HepG2 (cell line): ENCODE measurements at regions of chr3 and their contacts with region 1.

Region 1: DNA sequence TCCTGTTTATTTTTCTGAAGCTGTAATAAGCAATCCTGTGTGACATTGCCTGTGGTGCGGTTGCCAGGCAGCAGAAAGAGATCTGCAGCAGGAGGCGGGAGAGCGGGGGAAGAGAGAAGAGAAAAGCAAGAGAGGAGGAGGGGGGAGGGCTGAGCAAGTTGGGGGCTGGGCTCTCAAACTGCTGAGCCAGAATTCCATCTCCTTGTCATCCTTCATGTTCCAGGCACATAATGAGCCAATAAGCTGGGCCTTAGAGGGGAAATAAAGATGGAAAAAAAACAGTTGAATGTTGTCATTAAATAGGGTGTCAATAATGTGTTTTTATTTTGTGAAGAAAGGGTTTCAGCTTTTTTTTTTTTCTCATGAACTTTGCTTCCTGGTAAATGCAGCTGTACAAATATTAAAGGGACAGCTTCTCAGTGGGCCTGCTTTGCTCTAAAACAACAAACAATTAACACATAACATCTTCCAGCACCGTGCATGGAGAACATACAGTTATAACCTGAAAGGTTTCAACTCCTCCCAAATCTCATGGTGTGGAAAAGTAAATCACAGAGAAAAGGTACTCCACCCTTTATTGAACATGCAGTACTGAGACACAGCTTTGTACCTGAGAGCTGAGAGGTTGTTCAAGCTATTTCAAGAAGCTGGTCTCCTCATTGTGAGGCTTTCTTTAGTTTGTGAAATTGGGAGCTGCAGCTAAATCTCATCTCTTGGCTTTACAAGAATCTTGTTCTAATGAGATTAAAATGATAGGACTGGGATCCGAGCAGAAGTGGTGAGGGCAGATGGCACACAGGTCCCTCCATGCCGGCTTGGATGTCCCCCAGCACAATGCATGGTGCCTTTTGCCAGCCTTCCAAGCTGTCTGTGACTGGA is 451.1 kb upstream of the KCNMB2 start:
- DNase-seq: peak; percentile 9
- ATAC-seq: peak; percentile 87
- H3K4me3 ChIP-seq: no peak overlapping the region
- H3K27ac ChIP-seq: no peak overlapping the region
- H3K4me1 ChIP-seq: peaks cover 19% of the 10 kb centered on the region
- H3K27me3 ChIP-seq: no peaks in the 10 kb centered on the region
- CTCF ChIP-seq: no peak
- EP300 ChIP-seq: no peak
- POLR2A ChIP-seq: no peak
- RAD21 ChIP-seq: no peak

Region 2: GRCh38 chr3:178385280-178385952 is 300.2 kb after region 1 on chr3:
- CTCF ChIA-PET with region 1: no interaction called
- POLR2A ChIA-PET with region 1: no interaction called
- in situ Hi-C with region 1: no loop called
- intact Hi-C with region 1: loop called (anchors 10 kb)
- DNase-seq: peak; percentile 1
- ATAC-seq: peak; percentile 57; the same call in 2 of the 3 replicates
- H3K4me3 ChIP-seq: no peak overlapping the region
- H3K27ac ChIP-seq: no peak overlapping the region
- H3K4me1 ChIP-seq: peaks cover 11% of the 10 kb centered on the region
- H3K27me3 ChIP-seq: no peaks in the 10 kb centered on the region
- CTCF ChIP-seq: peak; percentile 65
- EP300 ChIP-seq: no peak
- POLR2A ChIP-seq: no peak
- RAD21 ChIP-seq: peak; percentile 35; the same call in 1 of the 2 replicates